ENCODE measurements at regions of chr2 and their contacts with region 1.

Region 1: GRCh38 chr2:46364797-46365457 is 67.7 kb downstream of the EPAS1 start:
- DNase-seq: no peak
- ATAC-seq: peak; percentile 69

Region 2: GRCh38 chr2:46010925-46011490 is 353.9 kb before region 1 on chr2:
- intact Hi-C with region 1: loop called (anchors 5 kb)
- DNase-seq: no peak
- ATAC-seq: peak; percentile 66

Region 3: GRCh38 chr2:46062637-46063412 is 302.1 kb before region 1 on chr2:
- intact Hi-C with region 1: loop called (anchors 10 kb)
- DNase-seq: peak; percentile 79
- ATAC-seq: peak; percentile 86

Region 4: DNA sequence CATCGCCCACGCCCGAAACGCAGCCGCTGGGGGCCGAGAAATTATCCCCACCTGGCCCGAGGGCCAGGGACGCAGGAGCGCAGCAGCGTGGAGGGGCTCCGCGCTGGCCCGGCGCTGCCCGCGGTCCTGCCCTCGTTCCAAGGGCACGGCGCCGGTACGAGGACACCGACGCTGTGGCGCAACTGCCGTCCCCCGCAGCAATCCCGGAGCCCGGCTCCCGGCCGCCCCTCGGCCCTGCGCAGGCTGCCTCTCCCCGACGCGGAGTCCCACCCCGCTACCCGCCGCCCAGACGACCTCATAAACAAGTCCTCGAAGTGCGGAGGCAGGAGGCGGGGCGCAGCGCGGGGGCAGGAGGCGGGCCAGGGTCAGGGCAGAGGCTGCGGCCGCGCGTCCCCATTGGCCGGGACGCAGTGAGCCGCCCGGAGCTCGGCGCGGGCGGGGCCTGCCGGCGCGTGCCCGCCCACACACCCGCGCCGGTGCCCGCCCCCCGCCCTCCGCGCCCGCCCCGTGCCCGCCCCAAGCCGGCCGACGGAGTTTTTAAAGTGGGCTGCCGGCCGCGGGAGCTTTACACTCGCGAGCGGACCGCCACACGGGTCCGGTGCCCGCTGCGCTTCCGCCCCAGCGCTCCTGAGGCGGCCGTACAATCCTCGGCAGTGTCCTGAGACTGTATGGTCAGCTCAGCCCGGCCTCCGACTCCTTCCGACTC is 67.9 kb before region 1 on chr2 and contains the start of gene EPAS1:
- intact Hi-C with region 1: loop called (anchors 5 kb)
- DNase-seq: peak; percentile 98
- ATAC-seq: peak; percentile 83
- total RNA-seq, gene EPAS1: 200 TPM